ENCODE measurements at regions of chr6 and their contacts with region 1.

Region 1: DNA sequence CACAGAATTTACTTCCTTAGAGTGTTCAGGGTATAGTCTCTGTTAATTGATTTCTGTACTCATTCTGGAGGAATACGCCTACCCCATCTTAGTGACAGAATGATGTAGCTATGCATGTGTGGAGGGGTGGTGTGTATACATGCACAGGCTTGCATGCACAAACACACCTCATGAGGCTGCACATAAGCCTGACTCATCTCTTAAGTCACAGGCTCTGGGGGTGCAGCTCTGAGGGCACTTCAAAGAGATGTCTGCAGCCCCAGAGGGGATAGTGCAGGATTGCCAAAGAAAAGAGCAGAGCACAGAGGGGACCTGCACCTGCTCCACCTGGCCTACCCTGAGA is 24.6 kb downstream of the TBX18 start:
- DNase-seq: no peak
- ATAC-seq: no peak
- H3K4me3 ChIP-seq: no peak overlapping the region
- H3K27ac ChIP-seq: no peak overlapping the region
- H3K4me1 ChIP-seq: peaks cover 4 to 6% of the 10 kb centered on the region in 2 donors
- H3K27me3 ChIP-seq: no peaks in the 10 kb centered on the region

Region 2: GRCh38 chr6:84685983-84686584 is 53.8 kb before region 1 on chr6:
- intact Hi-C with region 1: loop called in 1 of 2 experiments (anchors 5 kb)
- DNase-seq: no peak
- ATAC-seq: no peak
- H3K4me3 ChIP-seq: no peak overlapping the region
- H3K27ac ChIP-seq: no peak overlapping the region
- H3K4me1 ChIP-seq: peaks cover 0 to 3% of the 10 kb centered on the region in 2 donors
- H3K27me3 ChIP-seq: no peaks in the 10 kb centered on the region

Region 3: DNA sequence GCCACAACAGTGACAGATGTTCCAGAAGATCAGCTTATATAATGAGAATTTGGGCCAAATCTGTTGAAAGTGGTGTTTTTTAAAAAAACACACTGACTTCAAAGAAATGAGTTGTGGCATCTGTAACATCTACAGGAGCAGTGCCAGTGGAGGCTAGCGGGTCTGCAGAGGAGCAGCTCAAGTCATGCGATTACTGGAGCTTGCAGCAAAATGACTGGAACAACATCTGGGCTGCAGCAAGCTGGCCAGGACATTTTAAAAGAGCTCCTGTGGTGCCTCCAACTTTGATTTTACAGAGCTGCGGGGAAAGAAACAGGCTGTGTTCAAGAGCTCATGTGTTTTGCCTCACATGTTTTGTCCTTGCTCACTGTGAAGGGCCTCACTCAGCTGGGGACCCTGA is 32.7 kb before region 1 on chr6:
- intact Hi-C with region 1: loop called in 1 of 2 experiments (anchors 5 kb)
- DNase-seq: no peak
- ATAC-seq: peak; percentile 50
- H3K4me3 ChIP-seq: no peak overlapping the region
- H3K27ac ChIP-seq: peak overlapping the region in 1 of 2 donors; percentile 50
- H3K4me1 ChIP-seq: peaks cover 3 to 4% of the 10 kb centered on the region in 2 donors
- H3K27me3 ChIP-seq: no peaks in the 10 kb centered on the region

Region 4: DNA sequence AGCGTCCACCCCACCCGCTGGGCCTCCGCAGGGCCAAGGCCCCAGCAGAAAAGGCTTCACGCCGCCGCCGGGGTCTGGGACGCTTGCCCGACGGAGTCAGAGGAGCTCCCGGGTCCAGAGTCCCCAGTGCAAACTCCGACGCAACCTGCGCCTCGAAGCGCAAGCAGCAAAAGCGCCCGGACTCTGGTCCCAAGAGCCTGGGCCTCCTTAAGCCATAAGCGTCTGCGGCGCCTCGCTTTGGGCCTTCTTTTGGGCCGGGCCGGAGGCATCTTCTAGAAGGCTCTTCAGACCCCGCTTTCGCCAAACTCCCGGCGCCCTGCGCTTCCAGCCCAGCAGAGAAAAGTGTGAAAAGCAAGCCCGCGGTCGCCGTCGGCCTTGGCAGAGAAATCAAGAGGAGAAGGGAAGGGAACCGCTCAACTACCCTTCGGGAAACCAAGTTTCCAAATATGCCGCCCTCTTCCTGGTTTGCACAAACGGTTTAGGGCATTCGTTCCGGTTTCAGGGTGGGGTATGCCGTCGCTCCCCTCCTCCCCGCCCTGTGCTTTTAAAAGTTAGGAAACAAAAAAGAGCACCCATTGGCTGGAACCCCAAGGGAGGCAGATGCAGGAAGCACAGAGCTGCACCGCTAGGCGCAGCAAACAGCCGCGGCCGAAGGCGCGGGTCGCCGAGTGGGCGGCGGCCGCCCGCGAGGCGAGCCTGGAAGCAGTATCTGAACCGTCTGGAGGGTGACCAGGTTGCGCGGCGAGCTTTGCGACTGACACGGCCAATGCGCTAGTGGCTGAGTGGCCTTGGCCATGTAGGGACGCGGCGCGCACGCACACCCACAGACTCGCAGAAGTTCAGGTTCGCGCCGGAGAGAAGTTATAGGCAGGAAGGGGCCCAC is 23.4 kb after region 1 on chr6:
- intact Hi-C with region 1: no loop called
- DNase-seq: peak; percentile 81 to 93
- ATAC-seq: peak; percentile 77
- H3K4me3 ChIP-seq: peak overlapping the region; percentile 75 to 94
- H3K27ac ChIP-seq: peak overlapping the region; percentile 89 to 99
- H3K4me1 ChIP-seq: no peaks in the 10 kb centered on the region
- H3K27me3 ChIP-seq: no peaks in the 10 kb centered on the region

Region 5: DNA sequence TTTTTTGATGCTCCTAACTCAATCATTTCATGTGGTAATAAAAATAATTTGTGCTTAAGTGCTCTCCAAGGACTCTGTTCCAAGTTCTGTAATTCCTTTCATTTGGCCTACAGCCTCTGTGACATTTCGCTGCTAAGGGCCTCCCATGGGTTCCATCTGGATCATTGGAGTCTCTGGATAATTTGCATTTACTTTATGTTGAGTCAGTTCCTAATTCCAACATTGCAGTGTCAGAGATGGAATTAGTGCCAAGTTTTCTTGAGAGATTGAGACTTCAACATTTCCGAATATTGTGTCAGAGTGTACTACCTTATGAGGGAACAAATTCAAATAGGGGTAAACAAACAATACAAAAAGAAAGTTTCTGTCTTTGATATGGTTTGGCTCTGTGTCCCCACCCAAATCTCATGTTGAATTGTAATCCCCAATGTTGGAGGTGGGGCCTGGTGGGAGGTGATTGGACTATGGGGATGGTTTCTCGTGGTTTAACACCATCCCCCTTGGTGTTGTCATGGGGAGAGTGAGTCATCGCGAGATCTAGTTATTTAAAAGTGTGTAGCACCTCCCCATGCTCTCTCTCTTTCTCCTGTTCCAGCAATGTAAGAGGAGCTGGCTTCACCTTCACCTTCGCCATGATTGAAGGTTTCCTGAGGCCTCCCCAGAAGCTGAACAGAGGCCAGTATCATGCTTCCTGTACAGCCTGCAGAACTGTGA is 268.6 kb after region 1 on chr6:
- intact Hi-C with region 1: no loop called
- DNase-seq: no peak
- ATAC-seq: no peak
- H3K4me3 ChIP-seq: no peak overlapping the region
- H3K27ac ChIP-seq: no peak overlapping the region
- H3K4me1 ChIP-seq: no peaks in the 10 kb centered on the region
- H3K27me3 ChIP-seq: no peaks in the 10 kb centered on the region